GM12878 (cell line): ENCODE measurements at regions of chr4 and their contacts with region 1.

Region 1: DNA sequence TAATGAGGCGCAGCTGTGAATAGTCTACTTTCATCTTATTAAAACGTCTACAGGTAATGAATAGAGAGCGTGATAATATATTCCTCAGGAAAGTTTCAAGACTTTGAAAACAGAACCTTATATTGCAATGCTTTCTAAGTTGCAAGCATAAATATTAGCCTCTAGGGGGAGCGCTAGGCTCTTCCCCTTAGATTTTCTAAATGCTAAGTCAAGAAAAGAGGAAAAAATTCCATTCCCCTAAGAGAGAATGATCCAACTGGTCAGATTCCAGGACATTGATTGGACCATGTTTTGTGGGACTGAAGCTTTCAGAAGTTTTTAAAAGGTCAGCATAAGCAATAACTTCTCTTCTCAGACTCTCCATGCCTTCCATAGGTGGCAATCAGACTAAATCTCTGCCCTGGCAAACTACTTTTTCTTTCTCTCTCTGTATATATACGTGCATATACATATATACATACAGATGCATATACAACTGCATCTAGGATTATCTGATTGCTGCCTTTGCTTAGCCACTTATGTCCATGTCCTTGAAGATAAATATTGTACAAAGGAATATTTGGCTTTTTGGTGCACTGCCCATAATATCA is 492.9 kb downstream of the INPP4B start:
- DNase-seq: no peak
- ATAC-seq: peak; percentile 41
- H3K4me3 ChIP-seq: no peak overlapping the region
- H3K27ac ChIP-seq: no peak overlapping the region
- H3K4me1 ChIP-seq: no peaks in the 10 kb centered on the region
- H3K27me3 ChIP-seq: no peaks in the 10 kb centered on the region
- CTCF ChIP-seq: peak; percentile 68 to 76 (median 72)
- EP300 ChIP-seq: no peak
- POLR2A ChIP-seq: no peak
- RAD21 ChIP-seq: peak; percentile 73

Region 2: DNA sequence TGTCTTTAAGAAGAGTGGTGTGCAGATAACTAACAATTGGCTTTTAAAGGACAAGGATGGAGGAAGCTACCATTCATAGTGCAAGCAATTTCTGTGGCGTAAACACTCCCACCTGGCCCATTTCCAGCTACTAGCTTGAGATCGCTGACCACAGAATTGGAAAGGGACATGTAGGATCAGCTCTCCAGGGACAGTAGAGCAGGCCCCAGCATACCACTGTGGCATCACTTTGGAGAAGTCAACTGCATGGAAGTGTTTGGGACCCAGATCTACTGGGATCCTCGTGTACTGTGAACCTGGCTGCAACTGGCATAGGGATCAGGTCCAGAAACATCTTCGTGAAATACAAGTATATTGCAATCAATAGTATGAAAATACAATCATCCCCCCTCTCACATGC is 22.1 kb before region 1 on chr4:
- CTCF ChIA-PET with region 1: interaction called, 16 read pairs
- POLR2A ChIA-PET with region 1: no interaction called
- RAD21 ChIA-PET with region 1: interaction called, 13 read pairs
- SMC1A ChIA-PET with region 1: interaction called, 61 read pairs
- in situ Hi-C with region 1: no loop called
- intact Hi-C with region 1: no loop called
- DNase-seq: no peak
- ATAC-seq: no peak; the same call in 2 of the 3 replicates
- H3K4me3 ChIP-seq: no peak overlapping the region
- H3K27ac ChIP-seq: no peak overlapping the region
- H3K4me1 ChIP-seq: no peaks in the 10 kb centered on the region
- H3K27me3 ChIP-seq: no peaks in the 10 kb centered on the region; a peak in 1 of 4 replicates
- CTCF ChIP-seq: no peak
- EP300 ChIP-seq: no peak
- POLR2A ChIP-seq: no peak
- RAD21 ChIP-seq: no peak

Region 3: DNA sequence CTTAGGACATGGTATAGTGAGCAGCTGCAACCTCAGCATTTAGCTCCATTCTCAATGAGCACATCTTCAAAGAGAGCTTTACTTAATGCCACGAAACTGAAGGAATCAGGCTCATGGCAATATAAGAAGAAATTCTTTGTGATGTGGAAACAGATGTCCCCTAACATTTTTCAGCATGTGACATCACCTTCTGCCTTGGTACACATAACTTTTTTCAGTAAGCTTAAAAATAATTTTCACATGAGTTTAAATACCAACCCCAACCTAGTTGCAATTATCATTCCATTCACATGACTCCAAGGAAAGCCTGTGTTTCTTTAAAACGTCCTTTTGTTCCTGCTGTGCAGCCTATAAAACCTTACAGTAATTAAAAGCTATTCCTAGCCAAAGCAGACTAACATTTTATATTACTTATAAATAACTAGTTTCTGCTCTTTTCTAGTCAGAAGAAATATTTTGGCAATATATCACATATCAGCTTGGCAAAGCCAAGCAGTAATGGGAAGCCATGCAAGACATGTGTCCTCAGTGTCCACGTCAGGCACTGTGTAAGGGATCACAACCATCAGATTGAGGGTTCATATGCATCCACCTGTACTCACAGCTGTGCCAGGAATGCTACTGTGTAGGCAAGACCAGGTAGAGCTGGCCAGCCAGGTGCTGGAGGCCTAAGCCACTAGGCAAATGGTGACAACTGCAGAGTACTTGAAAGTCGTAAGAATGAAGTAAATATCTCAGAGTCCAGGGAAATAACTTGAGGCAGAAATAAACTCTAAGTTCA is 26.2 kb after region 1 on chr4:
- CTCF ChIA-PET with region 1: interaction called, 24 read pairs
- POLR2A ChIA-PET with region 1: interaction called, 5 read pairs
- RAD21 ChIA-PET with region 1: interaction called, 18 read pairs
- SMC1A ChIA-PET with region 1: interaction called, 66 read pairs
- in situ Hi-C with region 1: no loop called
- intact Hi-C with region 1: no loop called
- DNase-seq: no peak
- ATAC-seq: peak; percentile 7
- H3K4me3 ChIP-seq: no peak overlapping the region
- H3K27ac ChIP-seq: no peak overlapping the region
- H3K4me1 ChIP-seq: no peaks in the 10 kb centered on the region
- H3K27me3 ChIP-seq: no peaks in the 10 kb centered on the region
- CTCF ChIP-seq: no peak
- EP300 ChIP-seq: no peak
- POLR2A ChIP-seq: no peak
- RAD21 ChIP-seq: no peak

Region 4: GRCh38 chr4:142480244-142480643 is 127.0 kb after region 1 on chr4:
- CTCF ChIA-PET with region 1: interaction called, 6 read pairs
- POLR2A ChIA-PET with region 1: no interaction called
- RAD21 ChIA-PET with region 1: no interaction called
- SMC1A ChIA-PET with region 1: interaction called, 10 read pairs
- in situ Hi-C with region 1: no loop called
- intact Hi-C with region 1: no loop called
- DNase-seq: no peak
- ATAC-seq: no peak
- H3K4me3 ChIP-seq: no peak overlapping the region
- H3K27ac ChIP-seq: no peak overlapping the region
- H3K4me1 ChIP-seq: no peaks in the 10 kb centered on the region
- H3K27me3 ChIP-seq: no peaks in the 10 kb centered on the region
- CTCF ChIP-seq: no peak
- EP300 ChIP-seq: no peak
- POLR2A ChIP-seq: no peak
- RAD21 ChIP-seq: no peak

Region 5: GRCh38 chr4:142567199-142567598 is 214.0 kb after region 1 on chr4:
- CTCF ChIA-PET with region 1: interaction called, 119 read pairs
- POLR2A ChIA-PET with region 1: interaction called, 6 read pairs
- RAD21 ChIA-PET with region 1: interaction called, 133 read pairs
- SMC1A ChIA-PET with region 1: interaction called, 120 read pairs
- in situ Hi-C with region 1: no loop called
- intact Hi-C with region 1: loop called (anchors 5 kb)
- DNase-seq: no peak
- ATAC-seq: peak; percentile 70
- H3K4me3 ChIP-seq: no peak overlapping the region
- H3K27ac ChIP-seq: no peak overlapping the region
- H3K4me1 ChIP-seq: no peaks in the 10 kb centered on the region
- H3K27me3 ChIP-seq: no peaks in the 10 kb centered on the region
- CTCF ChIP-seq: peak in 1 of 3 experiments; percentile 28; a peak in 2 of 6 replicates
- EP300 ChIP-seq: no peak
- POLR2A ChIP-seq: no peak
- RAD21 ChIP-seq: no peak

Region 6: GRCh38 chr4:142840516-142841123 is 487.4 kb after region 1 on chr4:
- CTCF ChIA-PET with region 1: interaction called, 7 read pairs
- POLR2A ChIA-PET with region 1: no interaction called
- RAD21 ChIA-PET with region 1: interaction called, 3 read pairs
- SMC1A ChIA-PET with region 1: no interaction called
- in situ Hi-C with region 1: loop called (anchors 10 kb)
- intact Hi-C with region 1: loop called (anchors 2 kb)
- DNase-seq: no peak
- ATAC-seq: peak; percentile 53; the same call in 1 of the 3 replicates
- H3K4me3 ChIP-seq: no peak overlapping the region
- H3K27ac ChIP-seq: no peak overlapping the region
- H3K4me1 ChIP-seq: no peaks in the 10 kb centered on the region
- H3K27me3 ChIP-seq: peaks cover 2 to 4% of the 10 kb centered on the region in 2 experiments; a peak in 1 of 4 replicates
- CTCF ChIP-seq: peak; percentile 40 to 47 (median 43); a peak in 4 of 6 replicates
- EP300 ChIP-seq: no peak
- POLR2A ChIP-seq: no peak
- RAD21 ChIP-seq: peak; percentile 52